Activated B cell treated with CpG ODN at 0.5 μM for 24 hours (primary cell): ENCODE measurements at regions of chr20 and their contacts with region 1.

Region 1: DNA sequence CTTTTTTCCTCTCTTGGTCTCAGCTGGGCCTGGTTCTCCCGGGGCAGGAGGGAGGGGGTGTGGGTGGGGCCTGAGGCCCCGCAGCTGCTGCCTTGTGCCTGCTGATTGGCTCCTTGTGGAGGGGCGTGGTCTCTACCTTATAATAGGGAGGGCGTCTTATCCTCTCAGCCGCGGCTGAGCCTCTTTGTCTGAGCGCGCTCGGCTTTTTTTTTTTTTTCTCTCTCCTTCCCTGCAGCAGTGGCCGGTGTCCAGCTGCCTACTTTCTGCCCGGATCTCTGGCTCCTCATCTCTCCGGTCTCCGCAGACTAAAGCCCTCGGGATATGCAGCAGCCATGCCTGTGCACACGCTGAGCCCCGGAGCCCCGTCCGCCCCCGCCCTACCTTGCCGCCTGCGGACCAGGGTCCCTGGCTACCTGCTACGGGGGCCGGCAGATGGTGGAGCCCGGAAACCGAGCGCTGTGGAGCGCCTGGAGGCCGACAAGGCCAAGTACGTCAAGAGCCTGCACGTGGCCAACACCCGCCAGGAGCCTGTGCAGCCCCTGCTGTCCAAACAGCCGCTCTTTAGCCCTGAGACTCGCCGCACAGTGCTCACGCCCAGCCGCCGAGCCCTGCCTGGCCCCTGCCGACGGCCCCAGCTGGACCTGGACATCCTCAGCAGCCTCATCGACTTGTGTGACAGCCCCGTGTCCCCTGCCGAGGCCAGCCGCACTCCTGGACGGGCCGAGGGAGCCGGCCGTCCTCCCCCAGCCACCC is 11.1 kb downstream of the FAM110A start:
- DNase-seq: peak; percentile 64
- ATAC-seq: peak; percentile 98
- H3K4me3 Mint-ChIP-seq: peak overlapping the region; percentile 87
- H3K27ac Mint-ChIP-seq: peak overlapping the region; percentile 41
- H3K4me1 Mint-ChIP-seq: peaks cover 55% of the 10 kb centered on the region
- H3K27me3 Mint-ChIP-seq: no peaks in the 10 kb centered on the region
- CTCF ChIP-seq: no peak

Region 2: DNA sequence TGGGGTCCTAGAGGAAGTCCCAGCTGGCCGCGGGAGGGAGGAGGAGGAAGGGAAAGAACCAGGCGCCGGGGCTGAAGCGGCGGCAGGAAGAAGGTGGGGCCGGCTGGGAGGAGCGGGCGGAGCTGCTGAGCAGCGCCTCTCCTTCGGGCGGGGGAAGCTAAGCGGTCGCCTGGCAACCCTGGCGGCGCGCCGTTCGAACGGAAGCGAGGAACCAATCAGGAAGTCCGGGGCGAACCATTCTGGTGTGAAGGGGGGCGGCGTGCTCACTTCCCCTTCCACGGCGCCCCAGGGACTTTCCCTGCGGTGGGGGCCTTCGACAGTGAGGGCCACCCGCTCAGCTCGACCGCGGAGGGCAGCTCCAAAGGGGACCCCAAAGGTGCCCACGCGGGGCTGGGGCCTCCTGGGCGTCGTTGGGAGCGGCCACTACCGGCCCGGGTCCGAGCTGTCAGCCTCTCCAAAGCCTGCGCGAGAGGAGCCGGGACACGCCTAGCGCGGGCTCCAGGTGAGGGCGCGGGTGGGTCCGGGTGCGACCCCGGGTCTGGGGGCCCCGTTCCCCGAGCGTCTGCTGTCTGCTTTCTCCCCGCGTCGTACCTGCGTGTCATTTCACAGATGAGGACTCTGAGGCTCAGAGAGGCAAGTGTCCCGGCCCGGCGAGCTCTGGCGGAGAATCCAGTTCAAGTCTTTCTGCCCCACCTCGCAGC is 11.0 kb before region 1 on chr20 and contains the start of gene FAM110A:
- CTCF ChIA-PET with region 1: interaction called, 3 read pairs
- POLR2A ChIA-PET with region 1: interaction called, 50 read pairs
- intact Hi-C with region 1: loop called (anchors 1 kb)
- DNase-seq: peak; percentile 91
- ATAC-seq: peak; percentile 92
- H3K4me3 Mint-ChIP-seq: peak within 1 kb of the TSS; percentile 88
- H3K27ac Mint-ChIP-seq: peak within 1 kb of the TSS; percentile 81
- H3K4me1 Mint-ChIP-seq: peaks cover 44% of the 10 kb centered on the region
- H3K27me3 Mint-ChIP-seq: no peaks in the 10 kb centered on the region
- CTCF ChIP-seq: no peak
- total RNA-seq, gene FAM110A: 9.2 and 11.0 TPM in 2 replicates

Region 3: DNA sequence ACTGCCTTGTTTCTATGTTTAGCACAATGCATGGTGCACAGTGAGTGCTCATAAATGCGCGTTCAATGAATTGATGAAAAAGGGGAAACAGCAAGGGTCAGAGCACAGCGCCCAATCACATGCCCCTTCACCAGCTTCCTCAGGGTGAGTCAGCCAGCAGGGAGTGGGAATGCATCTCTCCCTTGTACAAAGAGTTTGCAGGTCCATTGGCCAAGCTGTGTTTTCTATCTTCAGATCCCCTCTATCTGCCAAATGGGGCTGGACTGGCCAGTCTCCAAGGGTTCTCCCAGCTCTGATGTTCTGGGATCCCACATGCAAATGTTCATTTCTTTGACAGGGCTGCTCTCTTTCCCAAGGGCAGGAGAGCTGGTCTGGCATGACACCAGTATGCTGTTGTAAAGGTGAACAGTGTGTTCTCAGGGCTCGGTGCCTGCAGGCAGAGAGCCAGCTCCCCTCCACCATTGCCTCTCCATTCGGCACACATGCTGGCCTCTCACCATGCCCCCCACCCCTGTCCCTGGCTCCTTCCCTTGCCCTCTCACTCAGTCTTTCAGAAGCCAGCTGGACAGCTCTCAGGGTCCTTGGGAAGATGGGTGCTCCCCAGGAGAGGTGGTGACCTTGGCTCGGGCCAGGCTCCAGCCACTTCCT is 46.5 kb after region 1 on chr20:
- CTCF ChIA-PET with region 1: no interaction called
- POLR2A ChIA-PET with region 1: no interaction called
- intact Hi-C with region 1: loop called (anchors 5 kb)
- DNase-seq: no peak
- ATAC-seq: no peak
- H3K4me3 Mint-ChIP-seq: peak overlapping the region; percentile 29
- H3K27ac Mint-ChIP-seq: no peak overlapping the region
- H3K4me1 Mint-ChIP-seq: peaks cover 30% of the 10 kb centered on the region
- H3K27me3 Mint-ChIP-seq: peaks cover 5% of the 10 kb centered on the region
- CTCF ChIP-seq: no peak

Region 4: DNA sequence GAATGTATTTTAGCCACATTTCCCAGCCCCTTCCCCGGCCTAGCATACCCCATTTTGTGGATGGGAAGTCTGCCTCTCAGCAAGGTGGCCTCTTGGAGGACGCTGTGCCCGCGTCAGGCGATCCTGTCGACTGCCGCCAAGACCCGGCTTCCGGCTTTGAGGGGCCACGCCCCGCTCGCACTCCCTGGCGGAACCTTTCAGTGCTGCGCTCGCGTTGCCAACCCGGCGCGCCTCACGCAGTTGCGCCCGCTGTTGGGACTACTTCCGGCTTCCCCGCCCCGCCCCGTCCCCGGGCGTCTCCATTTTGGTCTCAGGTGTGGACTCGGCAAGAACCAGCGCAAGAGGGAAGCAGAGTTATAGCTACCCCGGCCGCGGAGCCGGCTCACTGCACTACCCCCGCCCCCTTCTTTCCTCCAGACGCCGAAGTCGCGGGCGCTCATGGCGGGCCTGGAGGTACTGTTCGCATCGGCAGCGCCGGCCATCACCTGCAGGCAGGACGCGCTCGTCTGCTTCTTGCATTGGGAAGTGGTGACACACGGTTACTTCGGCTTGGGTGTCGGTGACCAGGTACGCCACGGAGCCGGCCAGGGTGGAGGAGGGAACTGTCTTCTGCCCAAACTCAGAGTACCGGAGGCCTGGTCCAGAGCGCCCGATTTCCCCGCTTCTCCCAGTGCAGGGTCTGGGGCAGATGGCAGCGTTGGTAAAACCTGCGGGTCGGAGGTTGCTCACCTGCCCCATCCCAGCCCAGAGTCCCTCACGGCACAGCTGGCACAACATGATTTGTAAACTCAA is 273.9 kb after region 1 on chr20 and contains the start of gene PSMF1:
- CTCF ChIA-PET with region 1: no interaction called
- POLR2A ChIA-PET with region 1: no interaction called
- intact Hi-C with region 1: loop called (anchors 1 kb)
- DNase-seq: peak; percentile 98
- ATAC-seq: peak; percentile 94
- H3K4me3 Mint-ChIP-seq: peak within 1 kb of the TSS; percentile 93
- H3K27ac Mint-ChIP-seq: peak within 1 kb of the TSS; percentile 85
- H3K4me1 Mint-ChIP-seq: peaks cover 64% of the 10 kb centered on the region
- H3K27me3 Mint-ChIP-seq: no peaks in the 10 kb centered on the region
- CTCF ChIP-seq: no peak
- total RNA-seq, gene PSMF1: 130 and 137 TPM in 2 replicates

Region 5: DNA sequence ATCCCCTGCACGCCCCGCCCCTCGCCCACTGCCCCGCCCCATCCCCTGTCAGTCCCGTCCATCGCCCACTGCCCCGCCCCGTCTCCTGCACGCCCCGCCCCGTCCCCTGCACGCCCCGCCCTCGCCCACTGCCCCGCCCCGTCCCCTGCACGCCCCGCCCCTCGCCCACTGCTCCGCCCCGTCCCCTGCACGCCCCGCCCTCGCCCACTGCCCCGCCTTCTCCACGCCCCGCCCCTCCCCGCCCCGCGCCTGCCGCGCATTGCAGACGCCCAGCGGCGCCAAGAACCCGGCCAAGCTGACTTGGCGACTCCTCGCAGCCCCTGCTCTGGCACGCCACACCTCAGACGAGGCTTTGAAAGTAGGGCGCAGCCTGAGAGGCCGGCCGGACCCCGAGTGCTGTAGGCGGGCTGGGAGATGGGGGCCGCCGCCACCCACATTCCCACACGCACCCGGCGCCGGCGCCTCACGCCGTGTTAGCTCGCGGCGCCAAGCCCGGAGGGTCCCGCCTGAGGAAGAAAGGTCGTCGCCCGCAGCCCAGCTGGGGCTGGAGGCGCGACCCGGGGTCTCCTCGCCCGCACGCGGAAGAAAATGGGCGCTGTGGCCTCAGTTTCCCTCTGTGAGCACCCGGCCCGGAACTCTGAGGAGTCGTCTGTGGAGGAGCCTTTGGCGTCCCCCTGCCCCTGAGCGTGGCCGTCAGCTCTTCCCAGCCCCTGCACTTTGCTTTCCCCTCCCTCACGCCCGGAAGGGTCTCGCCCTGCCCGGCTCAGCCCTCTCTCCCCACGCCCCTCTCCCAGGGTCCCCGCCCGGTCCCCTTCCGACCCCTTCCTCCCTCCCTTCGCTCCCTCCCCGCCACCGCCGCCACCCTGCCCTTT is 381.4 kb after region 1 on chr20 and contains the start of gene RAD21L1:
- CTCF ChIA-PET with region 1: no interaction called
- POLR2A ChIA-PET with region 1: no interaction called
- intact Hi-C with region 1: loop called (anchors 5 kb)
- DNase-seq: peak; percentile 56
- ATAC-seq: peak; percentile 89
- H3K4me3 Mint-ChIP-seq: peak within 1 kb of the TSS; percentile 76
- H3K27ac Mint-ChIP-seq: no peak within 1 kb of the TSS
- H3K4me1 Mint-ChIP-seq: peaks cover 13% of the 10 kb centered on the region
- H3K27me3 Mint-ChIP-seq: peaks cover 23% of the 10 kb centered on the region
- CTCF ChIP-seq: no peak
- total RNA-seq, gene RAD21L1: not detected in 2 replicates